K562 (cell line): ENCODE measurements at regions of chr2 and their contacts with region 1.

Region 1: DNA sequence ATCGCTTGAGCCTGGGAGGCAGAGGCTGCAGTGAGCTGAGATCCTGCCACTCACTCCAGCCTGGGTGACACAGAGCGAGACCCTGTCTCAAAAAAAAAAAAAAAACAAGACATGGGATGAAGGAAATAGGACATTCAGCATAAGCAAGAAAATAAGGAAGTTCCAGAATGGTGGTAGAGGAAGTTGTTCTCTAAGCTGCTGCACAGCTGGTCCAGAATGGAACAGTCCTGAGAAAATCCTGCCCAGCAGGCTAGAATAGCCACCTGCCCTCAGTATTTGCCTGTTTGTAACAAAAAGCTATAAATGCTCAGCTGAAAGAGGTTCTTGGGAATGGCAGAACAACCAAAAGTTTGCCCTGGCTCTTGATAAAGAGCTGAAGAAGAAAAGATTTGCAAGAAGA is 11.1 kb upstream of the MAPRE3 start:
- DNase-seq: no peak
- ATAC-seq: no peak
- H3K4me3 ChIP-seq: no peak overlapping the region
- H3K27ac ChIP-seq: no peak overlapping the region
- H3K4me1 ChIP-seq: peaks cover 5 to 6% of the 10 kb centered on the region in 2 experiments; a peak in 3 of 5 replicates
- H3K27me3 ChIP-seq: peaks cover 25 to 28% of the 10 kb centered on the region in 2 experiments; a peak in 4 of 5 replicates
- CTCF ChIP-seq: no peak
- EP300 ChIP-seq: no peak
- POLR2A ChIP-seq: no peak
- RAD21 ChIP-seq: no peak

Region 2: DNA sequence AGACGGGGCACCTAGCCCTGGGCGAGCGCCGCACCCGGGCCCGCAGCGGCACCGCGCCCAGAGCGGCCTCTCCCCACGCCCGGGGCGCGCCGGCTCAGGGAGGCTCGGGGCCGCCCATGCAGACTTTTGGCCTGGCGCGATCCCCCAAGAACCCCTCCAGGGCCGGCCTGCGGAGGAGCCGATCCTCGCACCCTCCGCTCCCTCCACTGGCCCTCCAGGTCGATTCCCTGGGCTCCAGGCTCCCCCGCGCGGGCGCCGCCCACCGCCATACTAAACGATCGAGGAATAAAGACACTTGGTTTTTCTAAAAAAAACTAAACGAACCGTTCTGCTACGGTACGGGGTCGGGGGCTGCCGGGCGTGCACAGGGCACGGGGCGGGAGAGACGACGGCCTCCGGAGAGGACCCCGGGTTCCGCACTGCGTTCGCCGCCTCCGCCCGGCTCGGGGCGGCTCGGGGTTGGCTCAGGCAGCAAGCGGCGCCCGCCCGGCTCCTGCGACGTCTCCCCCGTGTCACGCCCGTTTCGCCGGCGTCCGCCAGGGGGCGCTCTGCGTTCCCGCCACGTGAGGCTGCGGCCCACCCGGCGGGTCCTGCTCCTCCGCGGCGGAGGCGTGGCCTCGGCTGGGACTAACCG is 126.9 kb after region 1 on chr2:
- CTCF ChIA-PET with region 1: interaction called, 22 read pairs
- POLR2A ChIA-PET with region 1: interaction called, 6 read pairs
- in situ Hi-C with region 1: loop called (anchors 5 kb)
- intact Hi-C with region 1: loop called (anchors 2 kb)
- DNase-seq: peak; percentile 96 to 97 (median 96)
- ATAC-seq: peak; percentile 90
- H3K4me3 ChIP-seq: peak overlapping the region; percentile 57
- H3K27ac ChIP-seq: peak overlapping the region; percentile 85
- H3K4me1 ChIP-seq: peaks cover 49 to 66% of the 10 kb centered on the region in 2 experiments
- H3K27me3 ChIP-seq: no peaks in the 10 kb centered on the region
- CTCF ChIP-seq: peak; percentile 62 to 89 (median 88)
- EP300 ChIP-seq: 0 out of 2 replicates have a peak, but pooled peaks have one; percentile 22
- POLR2A ChIP-seq: peak; percentile 70
- RAD21 ChIP-seq: peak; percentile 55

Region 3: DNA sequence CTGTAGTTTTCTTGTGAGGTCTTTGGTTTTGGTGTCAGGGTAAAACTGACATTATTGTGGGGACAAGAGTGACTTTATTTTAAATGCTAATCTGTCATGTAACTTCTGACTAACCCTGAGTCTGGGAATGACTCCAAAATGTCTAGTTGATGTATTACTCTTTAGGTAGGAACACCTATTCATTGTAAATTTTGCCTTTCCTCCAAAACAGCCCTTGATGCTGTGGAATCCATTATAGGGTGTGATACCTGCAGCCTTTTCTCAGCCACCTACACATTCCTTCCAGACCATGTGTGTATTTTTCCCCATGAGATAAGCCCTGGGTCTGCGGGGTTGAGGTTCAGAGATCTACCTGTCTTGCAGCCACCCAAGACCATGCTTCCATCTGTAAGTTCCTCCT is 184.0 kb after region 1 on chr2:
- CTCF ChIA-PET with region 1: no interaction called
- POLR2A ChIA-PET with region 1: no interaction called
- in situ Hi-C with region 1: no loop called
- intact Hi-C with region 1: no loop called
- DNase-seq: no peak
- ATAC-seq: no peak
- H3K4me3 ChIP-seq: no peak overlapping the region
- H3K27ac ChIP-seq: no peak overlapping the region
- H3K4me1 ChIP-seq: no peaks in the 10 kb centered on the region
- H3K27me3 ChIP-seq: no peaks in the 10 kb centered on the region
- CTCF ChIP-seq: no peak
- EP300 ChIP-seq: no peak
- POLR2A ChIP-seq: no peak
- RAD21 ChIP-seq: no peak

Region 4: DNA sequence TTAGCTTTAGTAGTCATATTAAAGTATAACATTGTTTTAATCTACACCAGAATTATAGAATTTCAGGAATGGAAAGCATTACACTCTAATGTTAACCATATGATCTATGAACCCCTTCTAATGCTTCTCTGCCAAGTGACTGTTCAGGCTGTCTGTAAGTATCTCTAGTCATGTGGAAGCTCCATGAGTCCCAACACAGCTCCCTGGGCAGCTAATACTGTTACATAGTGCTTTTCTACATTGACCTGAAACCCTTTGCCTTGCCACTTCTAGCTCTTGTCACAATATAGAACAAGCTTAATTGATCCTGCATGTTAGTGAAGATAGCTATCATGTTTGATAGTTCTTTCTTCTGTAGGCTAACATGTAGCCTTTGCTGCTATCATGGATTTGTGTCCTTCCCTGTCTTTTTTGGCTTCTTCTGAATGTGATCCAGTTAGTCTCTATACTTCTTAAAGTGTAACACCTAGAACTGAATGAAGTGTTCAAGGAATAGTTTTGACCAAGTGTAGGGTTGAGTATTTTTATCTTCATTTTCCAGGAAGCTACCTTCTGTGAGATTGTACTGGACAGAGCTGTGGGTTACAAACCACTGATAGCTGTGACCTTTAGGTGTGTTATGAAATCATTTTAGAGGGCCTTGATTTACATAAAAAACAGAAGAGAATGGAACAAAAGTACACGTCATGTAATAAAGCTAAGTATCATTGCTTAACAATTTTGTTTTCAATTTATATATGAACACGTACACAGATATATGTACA is 954.9 kb after region 1 on chr2:
- CTCF ChIA-PET with region 1: no interaction called
- POLR2A ChIA-PET with region 1: no interaction called
- in situ Hi-C with region 1: no loop called
- intact Hi-C with region 1: no loop called
- DNase-seq: no peak
- ATAC-seq: no peak
- H3K4me3 ChIP-seq: no peak overlapping the region
- H3K27ac ChIP-seq: no peak overlapping the region
- H3K4me1 ChIP-seq: no peaks in the 10 kb centered on the region; a peak in 2 of 5 replicates
- H3K27me3 ChIP-seq: no peaks in the 10 kb centered on the region
- CTCF ChIP-seq: no peak
- EP300 ChIP-seq: no peak
- POLR2A ChIP-seq: no peak
- RAD21 ChIP-seq: no peak